Gastrocnemius medialis (tissue), 4 donors: ENCODE measurements at regions of chr11 and their contacts with region 1.

Region 1: GRCh38 chr11:73661035-73661628 is 14.8 kb downstream of the PLEKHB1 start:
- DNase-seq: peak; percentile 72 to 78
- ATAC-seq: peak; percentile 90 to 91
- H3K4me3 ChIP-seq: peak overlapping the region; percentile 28 to 49 (median 40)
- H3K27ac ChIP-seq: no peak overlapping the region
- H3K4me1 ChIP-seq: peaks cover 12 to 27% of the 10 kb centered on the region in 2 donors
- H3K27me3 ChIP-seq: no peaks in the 10 kb centered on the region
- CTCF ChIP-seq: peak; percentile 96 to 99 (median 98)
- POLR2A ChIP-seq: no peak

Region 2: DNA sequence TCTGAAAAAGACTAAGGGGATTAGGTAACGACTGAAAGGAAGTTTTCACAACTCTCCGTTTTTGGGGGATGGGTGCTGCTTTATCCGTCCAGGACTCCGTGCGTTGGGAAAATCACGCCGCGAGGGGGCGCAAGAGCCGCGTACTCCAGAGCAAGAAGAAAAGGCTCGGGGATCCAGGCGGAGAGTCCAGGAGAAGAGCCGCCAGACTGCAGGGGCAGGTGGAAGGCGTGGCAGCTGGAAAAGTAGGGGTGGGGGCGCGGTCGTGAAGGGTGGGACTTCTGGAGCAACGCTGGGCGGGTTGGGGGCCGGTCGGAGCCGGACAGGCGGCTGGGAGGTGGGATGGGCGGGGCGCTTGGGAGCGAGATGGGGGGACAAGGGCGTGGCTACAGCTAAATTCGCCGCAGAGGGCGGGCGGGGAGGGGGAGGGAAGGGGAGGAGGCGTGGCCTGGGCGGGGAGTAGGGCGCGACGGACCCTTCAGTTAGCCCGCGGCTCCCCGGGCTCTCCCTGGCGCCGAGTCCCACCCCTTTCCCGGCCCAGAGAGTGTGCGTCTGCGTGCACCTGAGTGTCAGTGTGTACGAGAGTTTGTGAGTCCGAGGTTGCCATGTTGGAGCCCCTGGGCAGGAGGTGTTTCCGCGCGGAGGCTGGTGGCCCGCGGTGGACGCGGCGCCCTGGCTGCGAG is 353.7 kb before region 1 on chr11:
- in situ Hi-C with region 1: no loop called
- intact Hi-C with region 1: loop called (anchors 2 kb)
- DNase-seq: peak; percentile 88 to 92
- ATAC-seq: peak; percentile 80 to 82
- H3K4me3 ChIP-seq: peak overlapping the region; percentile 65 to 90 (median 79)
- H3K27ac ChIP-seq: peak overlapping the region; percentile 73 to 83 (median 82)
- H3K4me1 ChIP-seq: peaks cover 4 to 18% of the 10 kb centered on the region in 2 donors
- H3K27me3 ChIP-seq: peaks cover 0 to 2% (median 0%) of the 10 kb centered on the region in 3 donors
- CTCF ChIP-seq: peak; percentile 82 to 93 (median 91)
- POLR2A ChIP-seq: peak; percentile 29 to 39

Region 3: DNA sequence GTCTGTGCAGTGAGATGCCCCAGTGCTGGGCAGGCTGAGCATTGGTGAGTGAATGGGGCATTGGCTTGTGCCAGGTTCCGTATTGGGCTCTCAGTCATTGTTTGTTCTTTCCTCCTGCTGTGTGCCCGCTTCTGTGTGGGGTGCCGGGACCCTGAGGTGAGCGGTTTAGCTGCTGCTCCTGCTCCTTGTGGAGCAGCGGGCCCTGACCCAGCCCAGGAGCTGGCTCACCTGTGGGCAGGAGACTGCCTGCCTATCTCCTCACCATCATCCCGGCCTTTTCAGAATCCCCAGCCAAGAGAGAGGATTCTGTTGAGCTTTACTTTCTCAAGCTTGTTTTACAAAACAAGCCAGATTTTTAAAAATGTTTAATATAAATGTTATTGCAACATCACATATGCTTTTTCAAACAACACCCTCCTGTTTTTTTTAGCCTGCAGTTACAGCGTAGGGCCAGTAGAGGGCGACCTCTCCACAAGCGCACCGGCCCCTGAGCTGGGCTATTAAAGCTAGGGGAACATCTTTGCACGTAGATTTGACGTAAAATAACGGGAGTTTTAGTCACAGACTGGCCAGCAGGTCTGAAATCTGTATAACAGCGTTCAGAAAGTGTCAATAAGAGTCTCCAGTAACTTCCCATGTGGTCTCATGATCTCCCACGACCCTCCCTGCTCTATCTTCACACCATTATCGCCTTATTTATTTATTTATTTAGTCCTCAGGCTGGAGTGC is 310.1 kb before region 1 on chr11:
- in situ Hi-C with region 1: loop called in 3 of 4 experiments (anchors 5 to 10 kb)
- intact Hi-C with region 1: loop called (anchors 1 kb)
- DNase-seq: peak in 1 of 2 donors; percentile 51
- ATAC-seq: peak; percentile 81
- H3K4me3 ChIP-seq: no peak overlapping the region
- H3K27ac ChIP-seq: peak overlapping the region in 3 of 4 donors; percentile 7 to 27 (median 21)
- H3K4me1 ChIP-seq: peaks cover 0 to 5% of the 10 kb centered on the region in 2 donors
- H3K27me3 ChIP-seq: no peaks in the 10 kb centered on the region
- CTCF ChIP-seq: peak; percentile 92 to 97 (median 96)
- POLR2A ChIP-seq: no peak

Region 4: GRCh38 chr11:73404048-73404447 is 257.1 kb before region 1 on chr11:
- in situ Hi-C with region 1: loop called (anchors 5 to 10 kb)
- intact Hi-C with region 1: loop called (anchors 5 kb)
- DNase-seq: peak in 1 of 2 donors; percentile 73
- ATAC-seq: peak; percentile 59 to 63
- H3K4me3 ChIP-seq: no peak overlapping the region
- H3K27ac ChIP-seq: peak overlapping the region; percentile 3 to 43 (median 14)
- H3K4me1 ChIP-seq: peaks cover 4 to 9% of the 10 kb centered on the region in 2 donors
- H3K27me3 ChIP-seq: no peaks in the 10 kb centered on the region
- CTCF ChIP-seq: peak; percentile 50 to 74 (median 59)
- POLR2A ChIP-seq: no peak

Region 5: GRCh38 chr11:73478738-73479347 is 182.3 kb before region 1 on chr11:
- in situ Hi-C with region 1: no loop called
- intact Hi-C with region 1: loop called (anchors 1 kb)
- DNase-seq: no peak
- ATAC-seq: peak; percentile 76 to 95
- H3K4me3 ChIP-seq: no peak overlapping the region
- H3K27ac ChIP-seq: peak overlapping the region in 3 of 4 donors; percentile 11 to 40 (median 20)
- H3K4me1 ChIP-seq: peaks cover 6 to 16% of the 10 kb centered on the region in 2 donors
- H3K27me3 ChIP-seq: no peaks in the 10 kb centered on the region
- CTCF ChIP-seq: peak; percentile 48 to 77 (median 64)
- POLR2A ChIP-seq: no peak

Region 6: GRCh38 chr11:73612601-73613140 is 48.5 kb before region 1 on chr11:
- in situ Hi-C with region 1: no loop called
- intact Hi-C with region 1: no loop called
- DNase-seq: no peak
- ATAC-seq: no peak
- H3K4me3 ChIP-seq: no peak overlapping the region
- H3K27ac ChIP-seq: no peak overlapping the region
- H3K4me1 ChIP-seq: no peaks in the 10 kb centered on the region
- H3K27me3 ChIP-seq: no peaks in the 10 kb centered on the region
- CTCF ChIP-seq: no peak
- POLR2A ChIP-seq: no peak

Region 7: DNA sequence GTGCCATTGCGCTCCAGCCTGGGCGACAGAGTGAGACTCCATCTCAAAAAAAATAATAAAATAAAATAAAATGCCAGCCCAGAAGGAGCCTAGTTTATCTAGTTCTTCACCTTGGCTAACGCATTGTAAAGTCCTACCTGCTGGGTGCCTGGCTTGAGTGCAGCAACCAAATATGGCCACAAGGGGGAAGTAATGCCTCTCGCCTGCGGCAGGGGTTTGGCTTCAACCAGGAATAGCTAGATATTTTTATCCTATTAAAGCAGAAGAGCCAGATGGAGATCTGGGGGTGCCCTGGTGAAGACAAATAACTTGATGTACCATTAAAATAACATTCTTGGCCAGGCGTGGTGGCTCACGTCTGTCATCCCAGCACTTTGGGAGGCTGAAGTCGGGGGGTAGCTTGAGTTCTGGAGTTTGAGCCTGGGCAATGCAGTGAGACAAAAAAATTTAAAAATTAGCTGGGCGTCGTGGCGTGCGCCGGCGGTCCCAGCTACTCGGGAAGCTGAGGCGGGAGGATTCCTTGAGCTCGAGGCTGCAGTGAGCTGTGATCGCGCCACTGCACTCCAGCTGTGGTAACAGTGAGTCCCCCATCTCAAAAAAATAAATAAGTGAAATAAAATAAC is 35.3 kb before region 1 on chr11:
- in situ Hi-C with region 1: loop called in 1 of 4 experiments (anchors 5 kb)
- intact Hi-C with region 1: loop called (anchors 1 kb)
- DNase-seq: peak; percentile 53 to 71
- ATAC-seq: peak; percentile 83 to 93
- H3K4me3 ChIP-seq: peak overlapping the region; percentile 16 to 47 (median 36)
- H3K27ac ChIP-seq: no peak overlapping the region
- H3K4me1 ChIP-seq: peaks cover 22 to 26% of the 10 kb centered on the region in 2 donors
- H3K27me3 ChIP-seq: no peaks in the 10 kb centered on the region
- CTCF ChIP-seq: peak; percentile 74 to 94 (median 86)
- POLR2A ChIP-seq: no peak

Region 8: GRCh38 chr11:73705053-73705452 is 43.9 kb after region 1 on chr11:
- in situ Hi-C with region 1: no loop called
- intact Hi-C with region 1: no loop called
- DNase-seq: no peak
- ATAC-seq: no peak
- H3K4me3 ChIP-seq: no peak overlapping the region
- H3K27ac ChIP-seq: no peak overlapping the region
- H3K4me1 ChIP-seq: no peaks in the 10 kb centered on the region
- H3K27me3 ChIP-seq: no peaks in the 10 kb centered on the region
- CTCF ChIP-seq: no peak
- POLR2A ChIP-seq: no peak

Region 9: DNA sequence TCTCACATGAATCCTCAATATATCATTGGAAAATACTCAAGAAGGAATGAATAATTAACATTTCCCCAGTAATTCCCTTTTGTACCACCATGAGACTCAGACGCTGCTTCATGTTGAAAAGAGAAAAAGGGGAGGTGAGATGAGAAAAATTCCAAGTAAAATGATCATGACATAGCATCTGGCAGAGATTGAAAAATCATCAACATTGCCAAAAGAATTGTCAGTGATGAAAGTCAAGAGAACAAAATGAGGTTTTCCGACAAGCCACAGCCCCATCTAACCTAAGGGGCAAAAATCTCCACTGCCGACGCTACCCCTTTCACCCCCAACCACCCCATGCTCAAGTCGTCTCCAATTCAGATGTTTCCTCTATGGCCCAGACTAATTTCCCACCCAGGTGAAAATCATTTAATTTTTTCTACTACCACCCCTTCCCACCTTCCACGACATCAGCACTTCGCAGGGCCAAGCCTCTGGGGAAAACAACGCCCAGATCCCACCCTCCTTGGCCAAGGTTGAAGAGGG is 98.5 kb after region 1 on chr11:
- in situ Hi-C with region 1: no loop called
- intact Hi-C with region 1: no loop called
- DNase-seq: no peak
- ATAC-seq: no peak
- H3K4me3 ChIP-seq: peak overlapping the region; percentile 93 to 100 (median 95)
- H3K27ac ChIP-seq: peak overlapping the region; percentile 93 to 100 (median 98)
- H3K4me1 ChIP-seq: peaks cover 20 to 21% of the 10 kb centered on the region in 2 donors
- H3K27me3 ChIP-seq: no peaks in the 10 kb centered on the region
- CTCF ChIP-seq: peak in 1 of 5 experiments; percentile 16
- POLR2A ChIP-seq: no peak

Region 10: GRCh38 chr11:73866586-73866996 is 205.5 kb after region 1 on chr11:
- in situ Hi-C with region 1: no loop called
- intact Hi-C with region 1: no loop called
- DNase-seq: peak; percentile 9 to 37
- ATAC-seq: peak; percentile 90 to 91
- H3K4me3 ChIP-seq: no peak overlapping the region
- H3K27ac ChIP-seq: peak overlapping the region in 3 of 4 donors; percentile 3 to 65 (median 19)
- H3K4me1 ChIP-seq: peaks cover 0 to 9% of the 10 kb centered on the region in 2 donors
- H3K27me3 ChIP-seq: no peaks in the 10 kb centered on the region
- CTCF ChIP-seq: no peak
- POLR2A ChIP-seq: no peak